ENCODE measurements at regions of chr11 and their contacts with region 1.

Region 1: DNA sequence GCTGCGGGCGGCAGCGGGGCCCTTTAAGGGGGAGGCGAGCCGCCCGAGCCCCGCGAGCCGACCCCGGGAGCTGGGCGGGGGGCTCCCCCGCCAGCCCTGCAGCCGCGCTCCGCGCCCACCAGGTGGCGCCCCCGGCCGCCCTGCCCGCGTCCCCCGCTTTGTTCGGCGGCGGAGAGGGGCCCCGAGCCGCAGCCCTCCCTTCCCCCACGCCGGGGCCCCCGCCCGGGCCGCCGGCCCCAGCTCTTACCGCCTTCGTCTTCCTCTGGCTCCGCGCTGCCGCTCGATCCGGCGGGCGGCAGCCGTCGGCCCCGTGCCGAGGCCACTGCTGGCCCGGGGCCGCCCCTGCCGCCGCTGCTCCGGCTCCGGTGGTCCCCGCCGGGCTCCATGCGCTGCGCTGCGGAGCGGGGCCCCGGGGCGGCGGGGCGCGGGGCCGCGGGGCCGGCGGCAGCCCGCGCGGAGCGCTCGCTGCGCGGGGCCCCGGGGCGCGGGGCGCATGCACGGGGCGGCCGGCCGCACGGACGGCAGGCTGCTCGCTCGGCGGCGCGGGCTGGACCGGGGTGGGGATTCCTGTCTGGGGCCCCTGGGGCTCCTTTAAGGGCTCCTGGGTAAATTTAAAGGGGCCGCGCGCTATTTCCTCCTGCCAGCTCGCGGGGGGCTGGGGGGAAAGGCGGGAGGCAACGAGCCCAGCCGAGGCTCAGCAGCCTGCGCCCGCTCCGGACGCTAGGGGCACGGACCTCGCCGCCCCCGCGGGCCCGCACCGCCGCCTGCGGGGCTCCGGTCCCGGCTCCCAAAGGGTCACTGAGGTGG is at the start of gene ZFTA:
- DNase-seq: peak; percentile 98
- H3K4me3 ChIP-seq: peak within 1 kb of the TSS; percentile 78 to 89
- H3K27ac ChIP-seq: peak within 1 kb of the TSS; percentile 59 to 84
- H3K4me1 ChIP-seq: peaks cover 0 to 22% of the 10 kb centered on the region in 2 experiments; a peak in 1 of 4 replicates
- H3K27me3 ChIP-seq: no peaks in the 10 kb centered on the region
- CTCF ChIP-seq: peak; percentile 43
- EP300 ChIP-seq: no peak
- RAD21 ChIP-seq: peak; percentile 61
- polyA plus RNA-seq, gene ZFTA: 8.7 and 10.3 TPM in 2 replicates

Region 2: DNA sequence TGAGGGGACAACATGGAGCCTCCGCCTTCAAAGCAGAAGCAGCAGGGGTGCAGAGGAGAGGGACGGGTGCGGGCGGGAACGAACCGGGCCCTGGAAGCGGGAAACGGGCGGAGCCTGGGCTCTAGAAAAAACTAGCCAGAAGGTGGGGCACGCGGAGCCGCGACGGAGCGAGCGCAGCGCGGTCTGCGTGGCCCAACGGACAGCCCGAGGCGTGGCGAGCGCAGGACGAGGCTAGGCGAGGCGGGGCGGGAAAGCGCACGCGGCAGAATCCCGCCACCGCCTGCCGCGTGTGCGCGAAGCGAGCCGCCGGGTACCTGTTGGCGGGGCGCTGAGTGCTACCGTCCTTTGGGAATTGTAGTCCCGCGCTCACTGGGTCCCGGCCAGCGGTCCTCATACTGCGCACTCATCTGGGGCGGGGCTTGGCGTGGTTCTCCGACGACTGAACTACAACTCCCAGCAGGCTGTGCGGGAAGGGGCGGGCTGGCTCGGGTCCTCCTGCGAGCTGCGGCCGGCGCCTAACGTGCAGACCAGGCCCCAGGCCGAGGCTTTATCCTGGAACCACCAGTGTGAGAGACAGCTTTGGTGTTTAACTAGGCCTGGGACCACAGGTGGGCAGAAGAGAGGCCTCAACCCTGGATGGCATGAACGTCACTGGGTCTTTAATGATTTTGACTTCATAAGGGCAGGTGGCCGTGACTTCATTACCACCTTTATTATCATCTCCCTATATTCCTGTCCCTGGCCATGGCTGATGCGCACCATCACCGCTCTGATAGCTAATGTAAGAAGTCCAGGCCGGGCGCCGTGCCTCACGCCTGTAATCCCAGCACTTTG is 96.9 kb before region 1 on chr11 and contains the start of gene ATL3:
- CTCF ChIA-PET with region 1: interaction called, 10 read pairs
- POLR2A ChIA-PET with region 1: interaction called, 3 read pairs
- DNase-seq: peak; percentile 97
- H3K4me3 ChIP-seq: peak within 1 kb of the TSS; percentile 59 to 79
- H3K27ac ChIP-seq: peak within 1 kb of the TSS; percentile 74 to 85
- H3K4me1 ChIP-seq: peaks cover 3 to 32% of the 10 kb centered on the region in 2 experiments
- H3K27me3 ChIP-seq: no peaks in the 10 kb centered on the region
- CTCF ChIP-seq: no peak
- EP300 ChIP-seq: no peak
- RAD21 ChIP-seq: no peak
- polyA plus RNA-seq, gene ATL3: 13.1 and 17.8 TPM in 2 replicates

Region 3: DNA sequence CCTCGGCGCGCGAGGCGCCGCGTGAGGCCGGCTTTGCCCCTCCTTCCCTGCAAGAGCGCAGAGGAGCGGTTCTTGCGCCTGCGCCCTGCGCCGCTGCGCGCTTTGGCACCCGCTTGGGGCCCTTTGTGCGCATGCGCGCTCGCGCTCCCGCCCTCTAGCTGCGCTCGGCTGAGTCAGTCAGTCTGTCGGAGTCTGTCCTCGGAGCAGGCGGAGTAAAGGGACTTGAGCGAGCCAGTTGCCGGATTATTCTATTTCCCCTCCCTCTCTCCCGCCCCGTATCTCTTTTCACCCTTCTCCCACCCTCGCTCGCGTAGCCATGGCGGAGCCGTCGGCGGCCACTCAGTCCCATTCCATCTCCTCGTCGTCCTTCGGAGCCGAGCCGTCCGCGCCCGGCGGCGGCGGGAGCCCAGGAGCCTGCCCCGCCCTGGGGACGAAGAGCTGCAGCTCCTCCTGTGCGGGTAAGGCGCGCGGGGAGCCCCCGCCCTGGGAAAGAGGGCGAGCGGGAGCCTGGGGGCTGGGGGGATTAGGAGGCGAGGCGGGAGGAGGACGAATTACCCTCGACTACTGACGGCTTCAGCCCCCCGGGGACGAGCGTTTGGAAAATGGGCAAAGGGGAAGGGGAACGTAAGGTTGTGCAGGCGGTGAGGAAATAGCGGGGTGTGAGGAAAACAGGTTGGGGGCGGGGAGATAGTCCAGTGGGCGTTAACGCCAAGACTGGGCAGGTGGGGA is 87.0 kb before region 1 on chr11 and contains the start of gene RTN3:
- CTCF ChIA-PET with region 1: interaction called, 14 read pairs
- POLR2A ChIA-PET with region 1: no interaction called
- DNase-seq: peak; percentile 98
- H3K4me3 ChIP-seq: peak within 1 kb of the TSS; percentile 63 to 97
- H3K27ac ChIP-seq: peak within 1 kb of the TSS; percentile 83 to 91
- H3K4me1 ChIP-seq: peaks cover 4% of the 10 kb centered on the region in 2 experiments; a peak in 3 of 4 replicates
- H3K27me3 ChIP-seq: no peaks in the 10 kb centered on the region
- CTCF ChIP-seq: no peak
- EP300 ChIP-seq: no peak
- RAD21 ChIP-seq: no peak
- polyA plus RNA-seq, gene RTN3: 52.7 and 59.0 TPM in 2 replicates

Region 4: GRCh38 chr11:63756919-63757761 is 11.3 kb before region 1 on chr11:
- CTCF ChIA-PET with region 1: interaction called, 11 read pairs
- POLR2A ChIA-PET with region 1: no interaction called
- DNase-seq: no peak
- H3K4me3 ChIP-seq: no peak overlapping the region
- H3K27ac ChIP-seq: no peak overlapping the region
- H3K4me1 ChIP-seq: no peaks in the 10 kb centered on the region
- H3K27me3 ChIP-seq: no peaks in the 10 kb centered on the region
- CTCF ChIP-seq: no peak
- EP300 ChIP-seq: no peak
- RAD21 ChIP-seq: no peak

Region 5: GRCh38 chr11:63779039-63779438 is 10.6 kb after region 1 on chr11:
- CTCF ChIA-PET with region 1: interaction called, 19 read pairs
- POLR2A ChIA-PET with region 1: no interaction called
- DNase-seq: no peak
- H3K4me3 ChIP-seq: no peak overlapping the region
- H3K27ac ChIP-seq: peak overlapping the region in 1 of 2 experiments; percentile 28; a peak in 2 of 4 replicates
- H3K4me1 ChIP-seq: peaks cover 0 to 13% of the 10 kb centered on the region in 2 experiments; a peak in 2 of 4 replicates
- H3K27me3 ChIP-seq: no peaks in the 10 kb centered on the region
- CTCF ChIP-seq: no peak
- EP300 ChIP-seq: no peak
- RAD21 ChIP-seq: no peak

Region 6: GRCh38 chr11:63783925-63784592 is 15.6 kb after region 1 on chr11:
- CTCF ChIA-PET with region 1: interaction called, 19 read pairs
- POLR2A ChIA-PET with region 1: no interaction called
- DNase-seq: peak; percentile 39
- H3K4me3 ChIP-seq: no peak overlapping the region
- H3K27ac ChIP-seq: no peak overlapping the region
- H3K4me1 ChIP-seq: peaks cover 0 to 4% of the 10 kb centered on the region in 2 experiments; a peak in 2 of 4 replicates
- H3K27me3 ChIP-seq: no peaks in the 10 kb centered on the region
- CTCF ChIP-seq: no peak
- EP300 ChIP-seq: no peak
- RAD21 ChIP-seq: no peak

Region 7: DNA sequence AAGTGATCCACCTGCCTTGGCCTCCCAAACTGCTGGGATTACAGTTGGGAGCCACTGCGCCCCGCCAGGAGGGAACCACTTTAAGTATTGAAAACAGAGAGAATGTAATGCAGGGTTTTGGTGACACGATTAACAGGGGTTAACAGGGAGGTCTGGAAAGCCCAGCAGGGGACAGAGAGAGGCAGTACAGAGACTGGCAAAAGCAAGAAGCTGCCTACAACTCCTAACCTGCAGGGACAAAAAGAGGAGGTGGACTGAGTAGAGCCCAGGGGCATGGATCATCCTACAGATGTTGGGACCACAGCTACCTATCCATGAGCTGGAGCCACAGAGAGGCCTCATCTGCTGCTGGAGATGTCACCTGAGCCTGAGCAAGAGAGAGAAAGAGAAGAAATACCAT is 43.1 kb after region 1 on chr11:
- CTCF ChIA-PET with region 1: interaction called, 17 read pairs
- POLR2A ChIA-PET with region 1: interaction called, 4 read pairs
- DNase-seq: no peak
- H3K4me3 ChIP-seq: no peak overlapping the region
- H3K27ac ChIP-seq: no peak overlapping the region
- H3K4me1 ChIP-seq: peaks cover 9 to 15% of the 10 kb centered on the region in 2 experiments; a peak in 3 of 4 replicates
- H3K27me3 ChIP-seq: no peaks in the 10 kb centered on the region
- CTCF ChIP-seq: no peak
- EP300 ChIP-seq: no peak
- RAD21 ChIP-seq: no peak